ENCODE measurements at regions of chr5 and their contacts with region 1.

Region 1: GRCh38 chr5:37248970-37249686 is at the start of gene CPLANE1:
- DNase-seq: peak; percentile 84 to 91 (median 87)
- ATAC-seq: peak; percentile 88 to 98 (median 96)
- H3K4me3 ChIP-seq: peak within 1 kb of the TSS; percentile 51 to 97 (median 84)
- H3K27ac ChIP-seq: peak within 1 kb of the TSS; percentile 86 to 99 (median 94)
- H3K4me1 ChIP-seq: peaks cover 0 to 30% (median 21%) of the 10 kb centered on the region in 12 donors
- H3K27me3 ChIP-seq: no peaks in the 10 kb centered on the region
- CTCF ChIP-seq: peak in 2 of 12 donors; percentile 5 to 27
- POLR2A ChIP-seq: peak; percentile 7 to 82
- total RNA-seq, gene CPLANE1: 6.7 to 13.2 (median 10.4) TPM

Region 2: GRCh38 chr5:37370864-37371726 is 122.0 kb after region 1 on chr5 and contains the start of gene NUP155:
- intact Hi-C with region 1: loop called in 1 of 10 experiments (anchors 5 kb)
- DNase-seq: peak; percentile 93 to 95 (median 93)
- ATAC-seq: peak; percentile 99
- H3K4me3 ChIP-seq: peak within 1 kb of the TSS; percentile 57 to 94 (median 85)
- H3K27ac ChIP-seq: peak within 1 kb of the TSS; percentile 11 to 92 (median 82)
- H3K4me1 ChIP-seq: peaks cover 10 to 30% (median 24%) of the 10 kb centered on the region in 12 donors
- H3K27me3 ChIP-seq: no peaks in the 10 kb centered on the region
- CTCF ChIP-seq: no peak
- POLR2A ChIP-seq: peak in 1 of 2 donors; percentile 63
- total RNA-seq, gene NUP155: 9.7 to 17.4 (median 12.4) TPM